Psoas muscle (tissue), 8 donors: ENCODE measurements at regions of chr15 and their contacts with region 1.

Region 1: GRCh38 chr15:22838292-22839042 is at the start of gene NIPA2:
- DNase-seq: peak; percentile 98 to 99
- ATAC-seq: peak; percentile 98 to 99 (median 98)
- H3K4me3 ChIP-seq: peak within 1 kb of the TSS; percentile 84
- H3K27ac ChIP-seq: peak within 1 kb of the TSS; percentile 95
- H3K4me1 ChIP-seq: peaks cover 17% of the 10 kb centered on the region
- H3K27me3 ChIP-seq: no peaks in the 10 kb centered on the region
- CTCF ChIP-seq: no peak
- total RNA-seq, gene NIPA2: 18.2 to 31.5 (median 27.6) TPM

Region 2: DNA sequence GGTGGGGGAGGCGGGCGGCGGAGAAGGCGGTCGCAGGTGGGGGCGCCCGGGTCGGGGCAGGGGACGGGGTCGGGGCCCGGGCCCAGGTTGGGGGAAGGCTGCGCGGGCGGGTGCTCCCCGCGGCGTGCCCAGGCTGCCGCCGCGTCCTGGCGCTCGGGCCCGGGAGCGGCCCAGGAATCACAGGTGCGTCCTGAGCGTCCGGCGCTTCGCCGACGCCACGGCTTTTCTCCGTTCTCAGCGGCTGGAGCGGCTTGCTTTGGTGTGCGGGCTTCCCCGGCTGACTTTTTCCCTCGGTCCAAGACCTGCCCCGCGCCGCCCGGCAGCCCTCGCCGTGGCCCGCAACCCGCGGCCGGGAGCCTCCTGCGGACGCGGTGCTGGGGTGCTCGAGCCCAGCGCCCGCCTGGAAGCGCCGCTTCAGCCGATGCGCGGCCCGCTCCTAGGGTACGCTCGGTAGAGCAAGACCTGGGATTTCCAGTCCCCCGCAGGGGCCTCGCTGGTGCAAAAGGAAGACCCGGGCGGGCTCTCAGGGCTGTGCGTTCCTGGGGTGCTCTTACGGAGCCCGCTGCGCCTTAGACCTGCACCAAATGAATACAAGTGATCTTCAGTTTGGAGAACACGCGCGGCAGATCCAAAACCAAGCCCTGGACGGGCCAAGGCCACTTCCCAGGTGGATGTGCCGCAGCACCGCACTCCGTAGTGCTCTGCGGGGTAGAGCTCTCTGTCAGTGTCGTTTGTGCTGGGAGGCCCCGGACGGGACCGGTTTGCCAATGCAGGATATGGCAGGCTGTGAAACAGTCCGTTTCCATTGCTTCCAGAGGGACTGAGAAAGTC is 51.4 kb before region 1 on chr15:
- intact Hi-C with region 1: loop called (anchors 2 to 10 kb)
- DNase-seq: peak in 1 of 2 donors; percentile 16
- ATAC-seq: peak; percentile 12 to 39 (median 26)
- H3K4me3 ChIP-seq: peak overlapping the region; percentile 77
- H3K27ac ChIP-seq: peak overlapping the region; percentile 90
- H3K4me1 ChIP-seq: peaks cover 7% of the 10 kb centered on the region
- H3K27me3 ChIP-seq: no peaks in the 10 kb centered on the region
- CTCF ChIP-seq: no peak